ENCODE measurements at regions of chr1 and their contacts with region 1.

Region 1: DNA sequence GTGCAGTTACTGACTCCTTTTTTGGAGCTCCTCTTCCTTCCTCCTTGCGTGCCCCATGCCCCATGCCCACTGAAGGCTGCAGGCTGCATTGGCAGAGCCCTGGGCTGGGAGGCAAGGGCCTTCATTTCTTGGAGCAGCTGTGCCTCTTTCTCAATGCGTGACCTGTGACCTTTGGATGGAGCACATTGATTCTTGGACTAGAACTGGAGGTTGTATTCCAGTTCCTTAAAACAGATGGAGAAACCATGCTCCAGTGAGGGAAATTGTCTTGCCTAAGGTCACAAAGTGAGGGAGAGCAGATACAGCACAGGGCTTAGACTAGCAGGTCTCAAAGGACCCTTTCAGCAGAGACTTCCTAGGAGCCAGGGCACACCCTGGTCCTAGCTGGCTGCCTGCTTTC is 9.0 kb downstream of the TMEM269 start:
- DNase-seq: no peak
- H3K4me3 ChIP-seq: no peak overlapping the region
- H3K27ac ChIP-seq: no peak overlapping the region
- H3K4me1 ChIP-seq: no peaks in the 10 kb centered on the region
- H3K27me3 ChIP-seq: no peaks in the 10 kb centered on the region
- CTCF ChIP-seq: no peak

Region 2: GRCh38 chr1:42747125-42747524 is 46.7 kb before region 1 on chr1:
- CTCF ChIA-PET with region 1: no interaction called
- POLR2A ChIA-PET with region 1: no interaction called
- intact Hi-C with region 1: no loop called
- DNase-seq: peak in 1 of 2 experiments; percentile 19
- H3K4me3 ChIP-seq: no peak overlapping the region
- H3K27ac ChIP-seq: no peak overlapping the region
- H3K4me1 ChIP-seq: no peaks in the 10 kb centered on the region
- H3K27me3 ChIP-seq: no peaks in the 10 kb centered on the region
- CTCF ChIP-seq: peak; percentile 69

Region 3: DNA sequence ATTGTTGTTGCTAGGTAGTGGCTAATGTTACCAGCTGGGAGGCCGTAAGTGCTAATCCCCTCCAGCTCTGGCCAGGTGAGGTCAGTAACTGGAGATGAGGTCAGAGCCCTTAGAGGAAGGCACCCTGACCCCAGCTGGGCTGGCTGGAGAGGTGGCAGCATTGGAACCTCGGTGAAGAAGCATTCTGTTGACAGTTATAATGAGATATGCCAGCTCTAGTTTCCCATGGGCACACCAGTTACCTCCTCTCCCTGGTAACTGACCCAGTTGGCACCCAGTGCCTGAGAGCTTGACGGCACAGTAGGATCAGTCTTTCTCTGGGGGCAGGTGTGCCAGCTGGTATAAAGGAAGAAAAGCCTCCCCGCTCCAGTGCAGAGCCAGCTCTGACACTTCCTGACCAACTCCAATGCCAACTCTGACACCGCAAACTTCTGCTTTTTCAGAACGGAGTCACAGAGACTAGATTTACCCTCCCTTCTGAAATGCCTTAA is 199.9 kb after region 1 on chr1:
- CTCF ChIA-PET with region 1: no interaction called
- POLR2A ChIA-PET with region 1: interaction called, 12 read pairs
- intact Hi-C with region 1: no loop called
- DNase-seq: no peak
- H3K4me3 ChIP-seq: no peak overlapping the region
- H3K27ac ChIP-seq: no peak overlapping the region
- H3K4me1 ChIP-seq: no peaks in the 10 kb centered on the region
- H3K27me3 ChIP-seq: no peaks in the 10 kb centered on the region
- CTCF ChIP-seq: no peak